ENCODE measurements at regions of chr16 and their contacts with region 1.

Region 1: DNA sequence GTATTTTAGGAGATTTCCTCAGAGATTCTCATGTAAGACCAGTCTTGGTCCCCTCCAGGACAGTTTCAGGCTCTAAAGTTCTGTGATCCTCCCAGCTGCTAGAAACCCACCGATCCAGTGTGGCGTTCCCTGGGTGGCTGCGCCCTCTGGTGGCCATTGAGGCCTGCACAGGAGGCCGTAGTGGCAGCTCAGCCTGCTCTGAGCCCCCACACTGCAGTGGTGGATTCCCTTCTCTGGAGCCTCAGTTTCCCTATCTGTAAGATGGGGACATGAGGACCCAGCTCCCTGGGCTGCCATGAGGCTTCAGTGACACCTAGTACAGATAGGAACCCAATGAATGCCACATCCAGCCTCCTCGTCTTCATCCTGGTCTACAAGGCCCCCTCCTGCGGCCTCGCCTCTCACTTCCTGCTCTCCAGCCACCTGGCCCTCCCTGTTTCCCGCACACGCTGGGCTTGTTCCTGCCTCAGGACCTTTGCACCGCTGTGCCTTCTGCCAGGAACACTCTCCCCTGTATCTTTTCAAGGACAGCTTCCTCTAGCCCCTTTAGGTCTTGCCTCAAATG is 16.5 kb downstream of the CCDC102A start:
- DNase-seq: peak; percentile 83
- ATAC-seq: peak; percentile 76
- H3K4me3 ChIP-seq: no peak overlapping the region
- H3K4me3 Mint-ChIP-seq: no peak overlapping the region
- H3K27ac ChIP-seq: no peak overlapping the region
- H3K27ac Mint-ChIP-seq: no peak overlapping the region
- H3K4me1 ChIP-seq: peaks cover 26 to 39% of the 10 kb centered on the region in 2 donors
- H3K4me1 Mint-ChIP-seq: peaks cover 38% of the 10 kb centered on the region
- H3K27me3 ChIP-seq: no peaks in the 10 kb centered on the region
- H3K27me3 Mint-ChIP-seq: no peaks in the 10 kb centered on the region
- CTCF ChIP-seq: peak; percentile 98

Region 2: GRCh38 chr16:57422026-57422944 is 97.6 kb before region 1 on chr16:
- CTCF ChIA-PET with region 1: interaction called, 83 read pairs
- POLR2A ChIA-PET with region 1: interaction called, 4 read pairs
- intact Hi-C with region 1: loop called (anchors 1 kb)
- DNase-seq: no peak
- ATAC-seq: no peak
- H3K4me3 ChIP-seq: no peak overlapping the region
- H3K4me3 Mint-ChIP-seq: no peak overlapping the region
- H3K27ac ChIP-seq: no peak overlapping the region
- H3K27ac Mint-ChIP-seq: no peak overlapping the region
- H3K4me1 ChIP-seq: peaks cover 10 to 13% of the 10 kb centered on the region in 2 donors
- H3K4me1 Mint-ChIP-seq: peaks cover 17% of the 10 kb centered on the region
- H3K27me3 ChIP-seq: no peaks in the 10 kb centered on the region
- H3K27me3 Mint-ChIP-seq: no peaks in the 10 kb centered on the region
- CTCF ChIP-seq: no peak

Region 3: DNA sequence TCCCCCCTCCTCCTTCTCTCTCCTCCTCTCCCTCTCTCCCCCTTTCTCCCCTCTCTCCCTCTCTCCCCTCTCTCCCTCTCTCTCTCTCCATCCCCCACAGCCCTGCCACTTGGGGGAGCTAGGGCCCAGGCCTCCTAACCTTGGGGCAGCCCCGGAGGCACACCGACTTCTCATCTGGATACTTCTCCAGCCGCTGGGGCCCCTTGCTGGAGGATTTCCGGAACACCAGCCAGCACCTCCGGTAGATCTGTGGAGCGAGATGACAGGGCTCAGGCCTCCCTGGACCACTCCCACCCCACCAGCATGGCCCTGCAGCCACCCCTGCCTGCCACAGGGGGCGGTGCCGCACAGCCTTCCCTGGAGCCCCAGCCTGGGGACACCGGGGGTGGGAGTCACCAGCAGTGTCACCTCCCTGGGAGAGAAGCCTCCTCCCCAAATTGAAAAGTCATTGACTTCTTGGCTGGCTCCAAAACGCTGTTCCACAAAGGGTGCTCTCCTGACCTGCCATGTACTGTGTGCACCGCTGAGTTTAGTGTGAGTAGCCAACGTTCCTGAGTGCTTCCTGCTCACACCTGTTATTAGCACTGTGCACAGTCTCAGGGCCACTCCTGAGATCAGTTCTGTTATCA is 44.1 kb before region 1 on chr16:
- CTCF ChIA-PET with region 1: interaction called, 14 read pairs
- POLR2A ChIA-PET with region 1: no interaction called
- intact Hi-C with region 1: no loop called
- DNase-seq: peak; percentile 78
- ATAC-seq: peak; percentile 93
- H3K4me3 ChIP-seq: no peak overlapping the region
- H3K4me3 Mint-ChIP-seq: peak overlapping the region; percentile 65
- H3K27ac ChIP-seq: no peak overlapping the region
- H3K27ac Mint-ChIP-seq: peak overlapping the region; percentile 7
- H3K4me1 ChIP-seq: peaks cover 33 to 48% of the 10 kb centered on the region in 2 donors
- H3K4me1 Mint-ChIP-seq: peaks cover 33% of the 10 kb centered on the region
- H3K27me3 ChIP-seq: peaks cover 0 to 13% (median 0%) of the 10 kb centered on the region in 4 experiments
- H3K27me3 Mint-ChIP-seq: peaks cover 9% of the 10 kb centered on the region
- CTCF ChIP-seq: peak; percentile 87

Region 4: GRCh38 chr16:57530104-57530521 is 10.2 kb after region 1 on chr16:
- CTCF ChIA-PET with region 1: interaction called, 26 read pairs
- POLR2A ChIA-PET with region 1: interaction called, 5 read pairs
- intact Hi-C with region 1: loop called (anchors 1 kb)
- DNase-seq: peak; percentile 75
- ATAC-seq: peak; percentile 72
- H3K4me3 ChIP-seq: peak overlapping the region in 4 of 5 experiments; percentile 4 to 20 (median 10)
- H3K4me3 Mint-ChIP-seq: peak overlapping the region; percentile 86
- H3K27ac ChIP-seq: peak overlapping the region; percentile 73 to 83
- H3K27ac Mint-ChIP-seq: peak overlapping the region; percentile 97
- H3K4me1 ChIP-seq: peaks cover 61 to 66% of the 10 kb centered on the region in 2 donors
- H3K4me1 Mint-ChIP-seq: peaks cover 68% of the 10 kb centered on the region
- H3K27me3 ChIP-seq: no peaks in the 10 kb centered on the region
- H3K27me3 Mint-ChIP-seq: no peaks in the 10 kb centered on the region
- CTCF ChIP-seq: no peak

Region 5: GRCh38 chr16:57544119-57544653 is 24.3 kb after region 1 on chr16:
- CTCF ChIA-PET with region 1: interaction called, 77 read pairs
- POLR2A ChIA-PET with region 1: interaction called, 5 read pairs
- intact Hi-C with region 1: loop called (anchors 2 kb)
- DNase-seq: peak; percentile 91
- ATAC-seq: peak; percentile 77
- H3K4me3 ChIP-seq: peak overlapping the region; percentile 59 to 92 (median 84)
- H3K4me3 Mint-ChIP-seq: peak overlapping the region; percentile 76
- H3K27ac ChIP-seq: peak overlapping the region; percentile 5 to 72
- H3K27ac Mint-ChIP-seq: peak overlapping the region; percentile 93
- H3K4me1 ChIP-seq: peaks cover 73 to 83% of the 10 kb centered on the region in 2 donors
- H3K4me1 Mint-ChIP-seq: peaks cover 76% of the 10 kb centered on the region
- H3K27me3 ChIP-seq: no peaks in the 10 kb centered on the region
- H3K27me3 Mint-ChIP-seq: no peaks in the 10 kb centered on the region
- CTCF ChIP-seq: no peak

Region 6: GRCh38 chr16:57555831-57556230 is 36.0 kb after region 1 on chr16:
- CTCF ChIA-PET with region 1: interaction called, 10 read pairs
- POLR2A ChIA-PET with region 1: no interaction called
- intact Hi-C with region 1: no loop called
- DNase-seq: no peak
- ATAC-seq: no peak
- H3K4me3 ChIP-seq: no peak overlapping the region
- H3K4me3 Mint-ChIP-seq: no peak overlapping the region
- H3K27ac ChIP-seq: no peak overlapping the region
- H3K27ac Mint-ChIP-seq: peak overlapping the region; percentile 43
- H3K4me1 ChIP-seq: peaks cover 15 to 21% of the 10 kb centered on the region in 2 donors
- H3K4me1 Mint-ChIP-seq: peaks cover 62% of the 10 kb centered on the region
- H3K27me3 ChIP-seq: no peaks in the 10 kb centered on the region
- H3K27me3 Mint-ChIP-seq: no peaks in the 10 kb centered on the region
- CTCF ChIP-seq: no peak

Region 7: GRCh38 chr16:57637424-57637823 is 117.5 kb after region 1 on chr16:
- CTCF ChIA-PET with region 1: no interaction called
- POLR2A ChIA-PET with region 1: no interaction called
- intact Hi-C with region 1: no loop called
- DNase-seq: no peak
- ATAC-seq: no peak
- H3K4me3 ChIP-seq: no peak overlapping the region
- H3K4me3 Mint-ChIP-seq: no peak overlapping the region
- H3K27ac ChIP-seq: no peak overlapping the region
- H3K27ac Mint-ChIP-seq: no peak overlapping the region
- H3K4me1 ChIP-seq: no peaks in the 10 kb centered on the region
- H3K4me1 Mint-ChIP-seq: no peaks in the 10 kb centered on the region
- H3K27me3 ChIP-seq: peaks cover 0 to 14% (median 2%) of the 10 kb centered on the region in 4 experiments
- H3K27me3 Mint-ChIP-seq: peaks cover 15% of the 10 kb centered on the region
- CTCF ChIP-seq: no peak

Measured in B cell (primary cell).